Astrocyte of the cerebellum (primary cell): ENCODE measurements at regions of chr19 and their contacts with region 1.

Region 1: DNA sequence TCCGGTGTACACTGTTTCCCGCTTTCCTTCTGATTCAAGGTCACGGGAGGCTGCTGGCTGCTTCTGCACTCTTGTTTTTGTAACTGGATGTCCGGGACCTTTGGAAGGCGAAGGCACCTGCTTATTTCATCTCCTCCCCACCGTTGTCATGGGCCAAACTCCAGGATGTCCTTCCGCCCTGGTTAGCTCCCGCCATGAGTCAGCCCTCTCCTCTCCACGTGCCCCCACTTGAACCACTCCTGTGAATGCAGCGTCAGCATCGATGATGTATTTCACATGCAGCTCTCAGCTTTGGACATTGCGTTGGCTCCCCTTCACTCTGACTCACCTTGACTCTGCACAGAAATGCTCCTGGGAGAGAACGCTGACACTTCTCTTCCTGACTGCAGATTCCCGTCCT is 5.5 kb upstream of the GALP start:
- DNase-seq: peak; percentile 6
- H3K4me3 ChIP-seq: no peak overlapping the region
- CTCF ChIP-seq: no peak

Region 2: GRCh38 chr19:56066152-56067023 is 103.9 kb before region 1 on chr19:
- in situ Hi-C with region 1: loop called (anchors 5 kb)
- DNase-seq: peak; percentile 6
- H3K4me3 ChIP-seq: peak overlapping the region; percentile 13
- CTCF ChIP-seq: peak; percentile 86